ENCODE measurements at regions of chr5 and their contacts with region 1.

Region 1: DNA sequence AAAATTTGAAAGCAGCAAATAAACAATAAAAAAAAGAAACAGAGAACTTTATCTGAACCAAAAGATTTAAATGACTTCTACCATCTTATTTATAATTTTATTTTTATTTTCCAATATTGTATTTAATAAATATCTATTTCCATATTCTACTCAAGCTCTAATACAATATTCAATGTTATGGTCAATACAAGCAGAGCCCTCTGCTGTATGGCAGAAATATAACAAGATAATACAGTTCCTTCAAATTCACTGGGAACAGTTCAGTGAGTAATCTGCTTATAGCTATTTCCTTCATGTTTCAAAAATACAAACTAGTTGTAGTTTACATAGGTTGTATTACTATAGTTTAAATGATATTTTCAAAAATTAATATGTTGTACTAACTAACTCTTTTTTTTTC is 332.7 kb downstream of the PRDM9 start:
- DNase-seq: no peak
- ATAC-seq: no peak
- H3K4me3 ChIP-seq: no peak overlapping the region
- H3K27ac ChIP-seq: no peak overlapping the region
- H3K4me1 ChIP-seq: no peaks in the 10 kb centered on the region
- H3K27me3 ChIP-seq: no peaks in the 10 kb centered on the region
- CTCF ChIP-seq: no peak
- EP300 ChIP-seq: no peak
- POLR2A ChIP-seq: no peak
- RAD21 ChIP-seq: no peak

Region 2: GRCh38 chr5:23466401-23466912 is 373.6 kb before region 1 on chr5:
- CTCF ChIA-PET with region 1: no interaction called
- POLR2A ChIA-PET with region 1: no interaction called
- in situ Hi-C with region 1: no loop called
- intact Hi-C with region 1: no loop called
- DNase-seq: peak; percentile 75
- ATAC-seq: peak; percentile 57; the same call in 2 of the 3 replicates
- H3K4me3 ChIP-seq: no peak overlapping the region
- H3K27ac ChIP-seq: no peak overlapping the region
- H3K4me1 ChIP-seq: no peaks in the 10 kb centered on the region
- H3K27me3 ChIP-seq: no peaks in the 10 kb centered on the region
- CTCF ChIP-seq: no peak
- EP300 ChIP-seq: no peak
- POLR2A ChIP-seq: no peak
- RAD21 ChIP-seq: no peak

Region 3: DNA sequence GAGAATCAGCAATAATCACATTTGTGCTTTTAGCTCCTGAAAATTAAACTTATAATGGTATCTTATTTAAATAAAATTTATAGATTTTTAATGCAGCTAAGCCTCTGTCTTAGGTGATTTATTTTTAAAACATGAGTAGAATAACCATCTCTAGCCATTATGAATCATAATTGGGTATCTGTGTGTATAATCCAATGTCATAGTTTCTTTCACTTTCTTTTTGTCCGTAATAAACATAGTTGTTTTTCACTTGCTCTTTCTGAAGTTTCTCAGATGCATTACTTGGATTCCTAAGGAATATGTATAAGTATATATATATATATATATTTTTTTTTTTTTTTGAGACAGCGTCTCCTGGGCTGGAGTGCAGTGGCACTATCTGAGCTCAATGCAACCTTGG is 44.3 kb after region 1 on chr5:
- CTCF ChIA-PET with region 1: no interaction called
- POLR2A ChIA-PET with region 1: no interaction called
- in situ Hi-C with region 1: no loop called
- intact Hi-C with region 1: loop called (anchors 1 kb)
- DNase-seq: no peak
- ATAC-seq: no peak
- H3K4me3 ChIP-seq: no peak overlapping the region
- H3K27ac ChIP-seq: no peak overlapping the region
- H3K4me1 ChIP-seq: no peaks in the 10 kb centered on the region
- H3K27me3 ChIP-seq: no peaks in the 10 kb centered on the region; a peak in 1 of 5 replicates
- CTCF ChIP-seq: no peak
- EP300 ChIP-seq: no peak
- POLR2A ChIP-seq: no peak
- RAD21 ChIP-seq: no peak

Measured in HepG2 (cell line).